ENCODE measurements at regions of chr6 and their contacts with region 1.

Region 1: DNA sequence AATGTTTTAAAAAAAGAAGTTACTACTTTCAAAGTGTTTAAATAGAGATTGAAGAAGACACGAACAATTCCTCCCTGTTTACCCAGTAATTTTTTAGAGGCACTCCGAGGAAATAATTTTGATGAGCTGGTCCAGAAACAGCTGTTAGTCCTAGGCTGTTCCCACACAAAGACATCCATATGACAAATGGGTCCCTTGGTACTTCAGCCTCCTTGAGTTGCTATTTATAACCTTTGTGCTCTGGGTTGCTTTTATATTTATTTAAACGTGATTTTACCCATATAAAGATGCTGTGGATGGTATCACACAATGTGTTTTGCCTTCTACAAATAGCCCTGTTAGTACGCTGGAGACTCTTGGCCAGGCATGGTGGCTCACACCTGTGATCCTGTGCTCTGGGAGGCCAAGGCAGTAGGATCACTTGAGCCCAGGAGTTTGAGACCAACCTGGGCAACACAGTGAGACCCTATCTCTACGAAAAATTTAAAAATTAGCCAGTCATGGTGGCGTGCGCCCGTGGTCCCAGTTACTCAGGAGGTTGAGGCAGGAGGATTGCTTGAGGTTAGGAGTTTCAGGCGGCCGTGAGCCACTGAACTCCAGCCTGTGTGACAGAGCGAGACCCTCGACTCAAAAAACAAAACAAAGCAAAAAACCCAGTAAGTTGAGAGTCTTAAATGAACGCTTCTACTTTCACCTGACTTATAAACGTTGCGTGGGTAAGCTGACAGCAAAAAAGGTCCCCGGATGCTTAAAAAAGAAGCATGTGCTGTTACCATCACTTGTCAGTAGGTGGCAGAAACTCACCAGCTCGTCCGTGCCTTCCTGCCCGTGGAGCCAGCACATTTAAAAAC is 56.9 kb upstream of the ARMH2 start:
- DNase-seq: peak; percentile 52 to 85 (median 68)
- H3K4me3 ChIP-seq: no peak overlapping the region
- H3K27ac ChIP-seq: no peak overlapping the region
- H3K4me1 ChIP-seq: peaks cover 0 to 12% of the 10 kb centered on the region in 2 donors
- H3K27me3 ChIP-seq: no peaks in the 10 kb centered on the region
- CTCF ChIP-seq: peak; percentile 67 to 92 (median 87)
- POLR2A ChIP-seq: no peak

Region 2: GRCh38 chr6:24991810-24992467 is 136.3 kb after region 1 on chr6:
- intact Hi-C with region 1: loop called (anchors 5 kb)
- DNase-seq: peak; percentile 28 to 73 (median 38)
- H3K4me3 ChIP-seq: no peak overlapping the region
- H3K27ac ChIP-seq: no peak overlapping the region
- H3K4me1 ChIP-seq: no peaks in the 10 kb centered on the region
- H3K27me3 ChIP-seq: no peaks in the 10 kb centered on the region
- CTCF ChIP-seq: peak; percentile 55 to 74 (median 63)
- POLR2A ChIP-seq: no peak

Region 3: GRCh38 chr6:25070547-25071366 is 215.1 kb after region 1 on chr6:
- intact Hi-C with region 1: loop called (anchors 5 kb)
- DNase-seq: peak; percentile 59 to 95 (median 86)
- H3K4me3 ChIP-seq: no peak overlapping the region
- H3K27ac ChIP-seq: no peak overlapping the region
- H3K4me1 ChIP-seq: no peaks in the 10 kb centered on the region
- H3K27me3 ChIP-seq: no peaks in the 10 kb centered on the region
- CTCF ChIP-seq: peak; percentile 79 to 91 (median 89)
- POLR2A ChIP-seq: no peak

Region 4: DNA sequence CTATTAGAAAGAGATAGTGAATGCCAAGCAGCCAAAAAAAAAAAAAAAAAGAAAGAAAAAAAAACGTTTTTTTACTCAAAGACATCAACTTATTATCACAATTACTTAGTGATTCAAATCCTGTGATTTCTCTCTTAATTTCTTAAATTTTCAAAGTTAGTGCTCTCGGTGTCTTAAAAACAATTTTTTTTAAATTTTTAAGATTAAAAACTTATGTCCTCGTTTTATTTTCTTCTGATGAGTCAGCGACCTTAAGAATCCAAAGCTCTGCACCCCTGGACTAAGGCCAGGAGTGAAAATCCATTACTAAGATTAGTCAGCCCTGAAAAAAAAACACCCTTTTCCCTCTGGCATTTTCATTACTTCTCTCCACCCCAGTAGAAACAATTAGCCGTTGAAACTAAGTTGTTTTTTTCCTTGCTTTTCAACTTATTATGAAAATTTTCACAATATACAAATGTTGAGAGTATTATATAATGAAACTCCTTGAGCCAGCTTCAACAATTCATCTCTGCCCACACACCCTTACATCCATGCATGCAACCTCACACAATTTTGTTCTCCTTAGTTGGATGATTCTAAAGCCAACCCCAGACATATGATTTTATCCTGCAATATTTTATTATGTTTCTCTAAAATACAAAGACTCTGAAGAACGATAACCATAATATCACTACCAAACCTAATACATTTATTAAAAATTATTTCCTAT is 338.0 kb after region 1 on chr6:
- intact Hi-C with region 1: no loop called
- DNase-seq: peak; percentile 73 to 86 (median 78)
- H3K4me3 ChIP-seq: no peak overlapping the region
- H3K27ac ChIP-seq: peak overlapping the region; percentile 32 to 90 (median 74)
- H3K4me1 ChIP-seq: peaks cover 17 to 19% of the 10 kb centered on the region in 2 donors
- H3K27me3 ChIP-seq: no peaks in the 10 kb centered on the region
- CTCF ChIP-seq: no peak
- POLR2A ChIP-seq: no peak

Measured in adrenal gland (tissue), 19 donors.